ENCODE measurements at regions of chr17 and their contacts with region 1.

Region 1: DNA sequence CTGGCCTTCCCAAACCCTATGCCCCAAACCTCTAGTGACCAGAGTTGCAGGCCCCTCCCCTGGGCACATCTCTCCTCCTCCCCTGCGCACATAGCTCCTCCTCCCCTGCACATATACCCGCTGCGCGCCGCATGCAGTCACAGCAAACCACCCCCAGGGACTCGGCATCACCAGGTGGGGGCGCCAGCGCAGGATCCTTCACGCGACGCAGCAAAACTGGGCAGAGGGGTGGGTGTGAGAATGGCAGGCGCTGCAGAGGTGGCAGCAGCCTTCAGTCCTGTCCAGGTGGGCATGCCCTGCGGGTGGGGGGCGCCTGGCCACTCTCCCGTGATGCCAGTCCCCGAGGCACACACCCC is 5.6 kb downstream of the CORO6 start:
- DNase-seq: peak; percentile 95
- H3K4me3 Mint-ChIP-seq: peak overlapping the region; percentile 81
- H3K27ac Mint-ChIP-seq: peak overlapping the region; percentile 84
- H3K4me1 Mint-ChIP-seq: peaks cover 62% of the 10 kb centered on the region
- H3K27me3 Mint-ChIP-seq: peaks cover 59% of the 10 kb centered on the region

Region 2: GRCh38 chr17:29568331-29569244 is 48.5 kb before region 1 on chr17 and contains the start of gene TP53I13:
- CTCF ChIA-PET with region 1: interaction called, 31 read pairs
- DNase-seq: peak; percentile 93
- H3K4me3 Mint-ChIP-seq: peak within 1 kb of the TSS; percentile 93
- H3K27ac Mint-ChIP-seq: peak within 1 kb of the TSS; percentile 99
- H3K4me1 Mint-ChIP-seq: peaks cover 40% of the 10 kb centered on the region
- H3K27me3 Mint-ChIP-seq: peaks cover 4% of the 10 kb centered on the region

Region 3: DNA sequence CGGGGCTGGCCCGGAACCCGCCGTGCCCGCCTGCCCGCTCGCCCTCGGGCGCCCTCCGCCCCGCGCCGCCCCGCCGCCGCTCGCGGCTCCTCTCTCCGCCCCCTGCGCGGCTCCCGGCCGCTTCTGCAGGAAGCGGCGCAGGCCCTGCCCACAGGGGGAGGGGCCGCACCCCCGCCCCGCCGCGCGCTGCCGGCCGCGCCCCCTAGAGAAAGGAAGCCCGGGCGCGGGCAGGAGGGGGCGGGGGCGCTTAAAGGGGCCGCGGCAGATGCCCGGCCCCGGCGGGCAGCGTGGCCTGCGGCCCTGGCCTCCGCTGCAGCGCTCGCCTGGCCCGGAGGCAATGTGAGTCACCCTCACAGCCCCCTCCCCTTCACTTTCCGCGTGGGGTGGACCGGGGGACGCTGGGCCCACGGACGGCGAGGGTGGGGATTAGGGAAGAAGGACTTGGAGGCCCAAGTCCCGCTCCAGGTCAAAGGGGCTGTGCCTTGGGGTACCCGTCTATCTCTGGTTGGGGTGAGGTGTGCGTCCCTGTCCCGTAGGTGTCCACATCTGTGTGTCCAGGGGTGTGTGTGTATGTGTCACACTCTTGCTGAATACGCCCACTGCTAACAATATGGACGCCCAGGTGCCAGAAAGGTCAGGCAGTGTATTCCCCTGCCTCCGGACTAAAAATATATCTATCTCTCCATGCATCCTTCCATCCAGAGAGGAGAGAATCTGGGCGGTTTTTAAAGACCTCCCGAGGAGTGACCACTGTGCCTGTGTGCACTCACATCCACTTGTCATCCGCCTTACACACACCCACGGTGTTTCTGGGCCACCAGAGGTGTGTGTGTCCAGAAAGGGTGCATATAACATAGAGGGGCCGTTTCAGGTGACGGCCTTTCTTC is 27.3 kb before region 1 on chr17 and contains the start of gene GIT1:
- CTCF ChIA-PET with region 1: interaction called, 47 read pairs
- DNase-seq: peak; percentile 87
- H3K4me3 Mint-ChIP-seq: peak within 1 kb of the TSS; percentile 93
- H3K27ac Mint-ChIP-seq: peak within 1 kb of the TSS; percentile 89
- H3K4me1 Mint-ChIP-seq: peaks cover 73% of the 10 kb centered on the region
- H3K27me3 Mint-ChIP-seq: peaks cover 7% of the 10 kb centered on the region

Region 4: DNA sequence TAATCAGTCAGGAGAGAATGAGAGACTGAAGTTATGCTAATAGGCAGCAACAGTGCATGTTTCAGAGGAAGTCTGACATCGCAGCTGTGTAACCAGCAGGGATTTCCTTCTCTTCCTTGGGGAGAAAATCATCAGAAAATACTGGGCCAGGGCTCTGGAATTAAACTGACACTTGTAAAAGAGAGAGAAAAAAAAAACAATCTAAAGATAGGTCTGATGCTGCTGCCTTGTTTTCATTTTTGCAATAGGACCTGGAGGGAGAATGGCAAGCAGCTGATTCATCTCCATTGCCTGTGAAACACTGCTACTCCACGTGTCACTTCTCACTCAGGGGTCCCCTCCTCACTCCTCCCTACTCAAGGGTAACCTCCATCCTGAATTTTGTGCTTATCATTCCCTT is 23.3 kb after region 1 on chr17:
- CTCF ChIA-PET with region 1: interaction called, 25 read pairs
- DNase-seq: no peak
- H3K4me3 Mint-ChIP-seq: no peak overlapping the region
- H3K27ac Mint-ChIP-seq: peak overlapping the region; percentile 49
- H3K4me1 Mint-ChIP-seq: peaks cover 24% of the 10 kb centered on the region
- H3K27me3 Mint-ChIP-seq: no peaks in the 10 kb centered on the region

Region 5: DNA sequence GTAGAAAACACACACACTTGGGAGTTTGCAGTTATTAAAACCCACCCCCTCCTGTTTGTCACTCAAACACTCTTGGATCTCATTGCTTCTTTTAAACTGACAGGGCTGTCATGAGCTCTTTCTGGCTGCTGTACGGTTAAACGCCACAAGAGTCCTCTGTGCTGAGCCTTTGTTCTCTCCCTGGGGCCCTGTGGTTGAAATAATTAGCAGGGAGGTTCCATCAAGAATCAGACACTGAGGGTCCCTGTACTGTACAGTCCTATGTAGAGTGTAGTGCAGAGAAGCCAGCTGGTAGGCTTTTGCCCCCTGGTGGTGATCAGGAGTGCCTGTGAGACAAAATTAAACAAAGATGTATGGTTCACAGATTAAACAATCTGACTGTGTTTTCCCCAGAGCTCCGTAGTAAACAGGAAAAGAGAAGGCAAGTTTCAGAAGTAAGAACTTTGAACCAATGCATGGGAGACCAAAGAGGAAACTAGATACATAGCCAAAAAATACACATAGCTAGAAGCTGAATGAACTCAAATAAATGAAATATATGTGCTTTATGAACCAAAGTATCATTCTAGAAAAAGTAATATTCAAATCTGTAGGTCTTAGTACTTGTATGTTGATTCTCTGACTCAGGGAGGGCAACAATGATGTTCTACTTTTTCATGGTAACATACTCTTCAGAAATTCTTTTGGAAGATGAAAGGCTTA is 314.3 kb after region 1 on chr17:
- CTCF ChIA-PET with region 1: interaction called, 24 read pairs
- DNase-seq: peak; percentile 80
- H3K4me3 Mint-ChIP-seq: no peak overlapping the region
- H3K27ac Mint-ChIP-seq: no peak overlapping the region
- H3K4me1 Mint-ChIP-seq: peaks cover 35% of the 10 kb centered on the region
- H3K27me3 Mint-ChIP-seq: no peaks in the 10 kb centered on the region

Measured in activated naive CD4-positive, alpha-beta T cell treated with anti-CD3 and anti-CD28 coated beads, Interleukin-2, amount 10 ng/mL, durations not matched to agents 7 days and 5 days (primary cell).